Psoas muscle (tissue), 8 donors: ENCODE measurements at regions of chr3 and their contacts with region 1.

Region 1: GRCh38 chr3:187745201-187746058 is at the start of gene BCL6:
- DNase-seq: peak; percentile 92 to 96
- ATAC-seq: peak; percentile 61 to 70 (median 64)
- H3K4me3 ChIP-seq: peak within 1 kb of the TSS; percentile 93
- H3K27ac ChIP-seq: peak within 1 kb of the TSS; percentile 100
- H3K4me1 ChIP-seq: peaks cover 24% of the 10 kb centered on the region
- H3K27me3 ChIP-seq: no peaks in the 10 kb centered on the region
- CTCF ChIP-seq: no peak
- total RNA-seq, gene BCL6: 235 to 524 (median 312) TPM

Region 2: GRCh38 chr3:187850331-187850921 is 105.0 kb after region 1 on chr3:
- intact Hi-C with region 1: loop called (anchors 10 kb)
- DNase-seq: peak; percentile 50 to 55
- ATAC-seq: peak in 1 of 4 donors; percentile 42
- H3K4me3 ChIP-seq: no peak overlapping the region
- H3K27ac ChIP-seq: no peak overlapping the region
- H3K4me1 ChIP-seq: no peaks in the 10 kb centered on the region
- H3K27me3 ChIP-seq: no peaks in the 10 kb centered on the region
- CTCF ChIP-seq: no peak

Region 3: DNA sequence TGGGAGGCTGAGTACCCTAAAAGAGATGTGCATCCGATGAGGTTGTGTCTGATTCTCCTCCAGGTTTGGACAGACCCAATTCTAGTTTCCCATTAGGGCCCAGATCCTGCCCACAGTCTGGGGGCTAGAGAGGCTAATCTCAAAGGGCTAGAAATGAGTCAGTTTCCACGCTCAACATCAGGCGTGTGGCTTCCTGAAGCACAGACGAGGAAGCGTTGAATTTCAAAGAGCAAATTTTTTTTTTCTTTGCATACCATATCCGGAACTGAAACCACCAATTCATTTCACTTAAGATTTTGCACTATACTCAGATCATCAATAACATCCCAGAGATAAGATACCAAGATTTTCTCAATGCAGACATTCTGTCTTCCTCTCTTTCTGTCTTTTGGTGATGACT is 173.6 kb after region 1 on chr3:
- intact Hi-C with region 1: loop called (anchors 5 kb)
- DNase-seq: no peak
- ATAC-seq: no peak
- H3K4me3 ChIP-seq: no peak overlapping the region
- H3K27ac ChIP-seq: no peak overlapping the region
- H3K4me1 ChIP-seq: peaks cover 38% of the 10 kb centered on the region
- H3K27me3 ChIP-seq: no peaks in the 10 kb centered on the region
- CTCF ChIP-seq: no peak

Region 4: DNA sequence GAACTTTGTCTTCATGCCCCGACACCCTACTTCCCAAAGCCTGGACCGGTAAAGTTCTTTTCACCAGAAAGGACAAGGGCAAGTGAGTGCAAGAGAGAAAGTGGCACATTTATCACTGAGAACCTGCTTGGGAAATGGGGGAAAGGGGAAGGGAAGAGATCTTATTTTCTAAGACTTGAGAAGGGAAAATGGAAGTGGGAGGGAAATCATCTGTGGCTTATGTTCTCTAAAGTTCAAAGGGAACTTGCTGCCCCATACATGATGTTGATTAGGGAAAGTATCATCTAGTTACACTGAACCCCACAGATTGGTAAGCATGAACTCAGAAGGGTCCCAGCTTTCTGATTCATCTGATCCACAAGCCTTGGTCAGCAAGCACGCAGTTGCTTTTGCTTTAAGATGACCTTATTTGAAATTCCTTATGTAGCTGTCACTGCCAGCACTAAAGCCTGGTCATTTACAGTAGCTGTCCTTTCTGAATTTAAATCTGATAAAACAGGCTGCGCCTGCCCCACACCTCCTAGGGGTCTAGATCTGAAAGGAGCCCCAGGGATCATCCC is 209.2 kb after region 1 on chr3:
- intact Hi-C with region 1: loop called (anchors 2 to 5 kb)
- DNase-seq: no peak
- ATAC-seq: peak; percentile 27 to 48 (median 38)
- H3K4me3 ChIP-seq: peak overlapping the region; percentile 4
- H3K27ac ChIP-seq: peak overlapping the region; percentile 93
- H3K4me1 ChIP-seq: peaks cover 52% of the 10 kb centered on the region
- H3K27me3 ChIP-seq: no peaks in the 10 kb centered on the region
- CTCF ChIP-seq: no peak

Region 5: DNA sequence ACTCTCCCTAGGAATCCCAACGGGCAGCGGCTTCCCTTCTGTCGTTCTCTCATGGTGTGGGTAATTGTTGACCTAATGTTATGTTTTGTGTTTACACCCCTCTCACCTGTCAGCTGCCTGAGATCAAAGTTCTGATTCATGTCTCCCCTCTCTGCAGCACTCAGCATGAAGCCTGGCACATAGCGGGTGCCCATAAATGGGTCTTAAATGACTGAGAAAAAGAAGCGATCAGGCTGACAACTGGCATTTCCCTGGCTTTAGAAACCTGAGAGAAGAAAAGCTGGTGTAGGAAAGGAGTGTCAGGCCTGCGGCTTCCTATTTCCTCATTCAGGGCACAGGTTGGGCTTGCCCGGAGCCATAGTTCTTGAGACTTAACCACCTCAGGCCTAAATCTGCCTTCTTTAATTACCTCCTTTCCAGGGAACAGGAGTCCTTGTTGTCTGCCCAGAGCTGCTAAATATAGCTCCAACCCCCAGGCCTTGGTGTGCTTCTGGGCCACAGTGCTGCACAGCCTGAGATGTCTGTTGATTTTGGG is 440.4 kb after region 1 on chr3:
- intact Hi-C with region 1: loop called in 1 of 2 experiments (anchors 1 kb)
- DNase-seq: peak; percentile 30 to 71
- ATAC-seq: peak; percentile 84 to 90 (median 88)
- H3K4me3 ChIP-seq: peak overlapping the region; percentile 35
- H3K27ac ChIP-seq: peak overlapping the region; percentile 92
- H3K4me1 ChIP-seq: peaks cover 70% of the 10 kb centered on the region
- H3K27me3 ChIP-seq: no peaks in the 10 kb centered on the region
- CTCF ChIP-seq: no peak

Region 6: DNA sequence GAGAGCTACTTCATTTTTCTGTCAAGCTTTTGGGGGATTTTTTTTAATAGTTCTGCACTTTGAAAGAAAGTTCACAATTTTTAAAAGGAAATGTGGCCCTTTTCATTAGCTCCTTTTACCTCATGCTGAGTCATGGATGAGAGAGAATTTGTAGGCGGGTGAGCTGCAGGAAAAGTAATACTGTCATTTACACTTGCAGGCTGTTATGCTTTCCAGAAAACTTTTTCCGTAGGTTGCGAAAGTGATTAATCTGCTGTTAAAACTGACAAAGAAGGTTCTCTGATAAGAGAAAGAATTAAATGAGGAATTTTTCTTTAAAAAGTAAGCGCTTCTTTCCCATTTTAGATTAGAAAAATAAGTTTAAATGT is 838.7 kb after region 1 on chr3:
- intact Hi-C with region 1: loop called in 1 of 2 experiments (anchors 10 kb)
- DNase-seq: no peak
- ATAC-seq: peak; percentile 58 to 89 (median 82)
- H3K4me3 ChIP-seq: peak overlapping the region; percentile 63
- H3K27ac ChIP-seq: peak overlapping the region; percentile 83
- H3K4me1 ChIP-seq: peaks cover 45% of the 10 kb centered on the region
- H3K27me3 ChIP-seq: no peaks in the 10 kb centered on the region
- CTCF ChIP-seq: no peak